ENCODE measurements at regions of chr18 and their contacts with region 1.

Region 1: GRCh38 chr18:5630057-5630899 is 86.5 kb upstream of the EPB41L3 start:
- DNase-seq: peak; percentile 65
- H3K4me3 ChIP-seq: peak overlapping the region; percentile 55 to 63 (median 61)
- H3K27ac ChIP-seq: no peak overlapping the region
- H3K4me1 ChIP-seq: peaks cover 19% of the 10 kb centered on the region
- H3K27me3 ChIP-seq: peaks cover 27 to 35% of the 10 kb centered on the region in 2 experiments
- CTCF ChIP-seq: no peak
- POLR2A ChIP-seq: no peak

Region 2: DNA sequence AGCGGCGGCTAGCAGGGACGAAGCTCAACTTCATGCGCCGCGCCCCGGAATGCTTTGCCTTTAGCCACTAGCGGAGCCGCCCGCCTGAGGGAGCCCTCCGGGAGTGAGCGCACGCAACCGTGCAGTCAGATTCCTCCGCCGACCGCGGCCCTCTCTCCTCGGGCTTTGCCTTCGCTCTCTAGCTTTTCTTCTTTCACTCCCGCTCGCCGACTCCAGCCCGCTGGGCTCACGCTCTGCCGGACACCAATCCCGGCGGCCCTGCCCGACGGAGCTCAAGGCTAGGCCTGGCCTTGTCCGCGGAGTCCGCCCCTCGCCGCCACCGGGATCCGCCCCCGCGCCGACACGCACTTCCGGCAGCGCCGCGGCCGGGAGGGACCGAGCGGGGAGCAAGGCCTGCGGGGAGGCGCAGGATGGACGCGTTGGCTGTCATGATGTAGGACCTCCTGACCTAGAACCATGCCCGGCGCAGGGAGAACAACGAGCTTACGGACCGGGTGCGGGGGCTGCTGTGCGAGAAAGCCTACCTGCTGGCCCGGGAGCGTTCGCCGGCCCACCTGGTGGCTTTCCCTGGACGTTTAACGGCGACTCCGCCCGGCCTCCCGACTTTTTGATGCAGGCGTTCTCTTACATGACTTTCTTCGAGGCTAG is 392.4 kb before region 1 on chr18:
- CTCF ChIA-PET with region 1: no interaction called
- POLR2A ChIA-PET with region 1: no interaction called
- dilution Hi-C with region 1: no loop called
- intact Hi-C with region 1: loop called (anchors 5 kb)
- DNase-seq: peak; percentile 91
- H3K4me3 ChIP-seq: peak overlapping the region; percentile 66 to 80 (median 72)
- H3K27ac ChIP-seq: peak overlapping the region; percentile 73
- H3K4me1 ChIP-seq: peaks cover 20% of the 10 kb centered on the region
- H3K27me3 ChIP-seq: peaks cover 9 to 17% of the 10 kb centered on the region in 2 experiments
- CTCF ChIP-seq: peak in 1 of 2 donors; percentile 61
- POLR2A ChIP-seq: peak; percentile 81

Region 3: DNA sequence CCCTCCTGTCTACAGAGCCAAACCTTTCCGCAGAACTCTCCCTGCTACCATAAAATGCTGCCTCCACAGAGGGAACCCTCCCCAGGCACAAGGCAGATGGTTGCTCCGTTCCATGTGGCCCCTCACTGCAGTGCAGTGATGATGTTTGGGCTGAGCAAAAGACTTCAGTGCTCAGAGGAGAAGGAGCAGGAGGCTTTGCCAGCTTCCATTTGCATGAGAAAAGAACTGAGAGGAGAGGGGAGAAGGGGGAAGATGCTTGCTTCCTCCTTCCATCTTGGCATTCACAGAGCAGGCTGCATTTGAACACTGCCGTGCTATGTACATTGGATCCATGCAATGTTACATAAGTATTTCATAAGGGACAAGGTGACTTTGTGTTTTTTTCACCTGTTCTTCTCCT is 311.6 kb after region 1 on chr18:
- CTCF ChIA-PET with region 1: no interaction called
- POLR2A ChIA-PET with region 1: no interaction called
- dilution Hi-C with region 1: no loop called
- intact Hi-C with region 1: no loop called
- DNase-seq: no peak
- H3K4me3 ChIP-seq: no peak overlapping the region
- H3K27ac ChIP-seq: no peak overlapping the region
- H3K4me1 ChIP-seq: no peaks in the 10 kb centered on the region
- H3K27me3 ChIP-seq: no peaks in the 10 kb centered on the region
- CTCF ChIP-seq: no peak
- POLR2A ChIP-seq: no peak

Measured in endothelial cell of umbilical vein (primary cell).